Activated CD4-positive, alpha-beta T cell treated with anti-CD3 and anti-CD28 coated beads for 36 hours (primary cell): ENCODE measurements at regions of chr21 and their contacts with region 1.

Region 1: GRCh38 chr21:35390013-35390776 is 341.1 kb upstream of the RUNX1 start:
- DNase-seq: peak; percentile 22
- ATAC-seq: no peak
- H3K4me3 Mint-ChIP-seq: no peak overlapping the region
- H3K27ac Mint-ChIP-seq: peak overlapping the region; percentile 21
- H3K4me1 Mint-ChIP-seq: peaks cover 10% of the 10 kb centered on the region
- H3K27me3 Mint-ChIP-seq: no peaks in the 10 kb centered on the region

Region 2: DNA sequence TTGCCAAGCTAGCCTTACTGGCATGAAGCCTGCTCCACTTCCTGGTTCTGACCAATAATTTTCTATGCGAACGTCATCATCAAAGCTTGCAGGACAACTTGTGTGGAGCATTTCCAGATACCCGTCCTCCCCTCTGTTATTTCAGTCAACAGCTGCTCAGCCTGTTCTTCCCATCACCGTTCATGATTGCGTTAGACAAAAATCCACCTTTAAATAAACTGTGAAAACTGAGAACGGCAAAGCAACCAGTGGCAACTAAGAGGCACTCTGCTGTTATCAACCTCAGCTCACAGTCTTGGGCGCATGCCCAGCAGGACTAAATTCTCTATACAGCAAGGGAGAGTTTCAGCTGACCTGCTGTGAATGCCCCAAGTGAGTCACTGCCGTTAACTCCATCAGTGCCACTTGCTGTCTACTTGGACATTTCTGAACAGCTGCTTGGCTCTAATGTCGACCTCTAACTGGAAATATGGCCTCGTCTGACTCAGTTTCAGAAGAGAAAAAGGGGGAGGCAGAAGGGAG is 133.7 kb before region 1 on chr21:
- CTCF ChIA-PET with region 1: no interaction called
- POLR2A ChIA-PET with region 1: no interaction called
- intact Hi-C with region 1: loop called in 1 of 2 experiments (anchors 10 kb)
- DNase-seq: no peak
- ATAC-seq: no peak
- H3K4me3 Mint-ChIP-seq: no peak overlapping the region
- H3K27ac Mint-ChIP-seq: no peak overlapping the region
- H3K4me1 Mint-ChIP-seq: peaks cover 32% of the 10 kb centered on the region
- H3K27me3 Mint-ChIP-seq: peaks cover 5% of the 10 kb centered on the region

Region 3: DNA sequence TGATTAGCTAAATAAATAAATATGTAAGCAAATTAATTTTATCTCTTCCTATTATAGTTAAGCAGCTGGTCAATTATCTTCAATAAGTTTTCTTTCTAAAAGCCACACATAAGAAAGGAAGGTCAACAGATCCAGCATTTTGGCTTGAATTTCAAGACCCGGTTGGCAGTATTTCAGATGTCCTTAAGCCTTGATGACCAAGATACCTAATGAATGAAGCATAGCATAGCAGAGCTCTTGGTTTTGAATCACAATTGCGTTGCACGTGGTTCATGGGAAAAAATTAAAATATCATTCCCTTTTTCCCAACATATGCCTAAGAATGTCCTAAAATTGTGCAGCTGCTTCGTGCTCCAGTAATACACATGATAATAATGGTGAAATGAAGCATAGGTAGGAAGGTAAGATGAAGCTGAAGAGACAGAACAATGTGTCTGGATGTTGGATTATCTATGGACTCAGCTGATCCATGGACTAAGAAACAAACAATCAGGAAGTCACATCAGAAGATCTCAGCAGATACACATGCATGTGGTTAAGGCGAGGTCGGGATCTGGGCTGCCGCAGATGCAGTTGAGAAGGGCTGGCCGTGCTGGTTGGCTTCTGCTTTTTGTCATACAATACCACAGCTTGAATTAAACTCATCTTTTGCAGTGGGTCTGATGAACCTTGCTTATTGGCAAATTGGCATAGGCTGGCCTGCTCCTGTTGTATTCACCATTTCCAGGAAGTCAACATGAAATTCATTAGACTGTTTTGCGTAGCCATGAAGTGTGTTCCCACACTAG is 56.2 kb before region 1 on chr21:
- CTCF ChIA-PET with region 1: no interaction called
- POLR2A ChIA-PET with region 1: interaction called, 3 read pairs
- intact Hi-C with region 1: loop called in 1 of 2 experiments (anchors 10 kb)
- DNase-seq: no peak
- ATAC-seq: no peak
- H3K4me3 Mint-ChIP-seq: no peak overlapping the region
- H3K27ac Mint-ChIP-seq: no peak overlapping the region
- H3K4me1 Mint-ChIP-seq: peaks cover 22% of the 10 kb centered on the region
- H3K27me3 Mint-ChIP-seq: no peaks in the 10 kb centered on the region

Region 4: DNA sequence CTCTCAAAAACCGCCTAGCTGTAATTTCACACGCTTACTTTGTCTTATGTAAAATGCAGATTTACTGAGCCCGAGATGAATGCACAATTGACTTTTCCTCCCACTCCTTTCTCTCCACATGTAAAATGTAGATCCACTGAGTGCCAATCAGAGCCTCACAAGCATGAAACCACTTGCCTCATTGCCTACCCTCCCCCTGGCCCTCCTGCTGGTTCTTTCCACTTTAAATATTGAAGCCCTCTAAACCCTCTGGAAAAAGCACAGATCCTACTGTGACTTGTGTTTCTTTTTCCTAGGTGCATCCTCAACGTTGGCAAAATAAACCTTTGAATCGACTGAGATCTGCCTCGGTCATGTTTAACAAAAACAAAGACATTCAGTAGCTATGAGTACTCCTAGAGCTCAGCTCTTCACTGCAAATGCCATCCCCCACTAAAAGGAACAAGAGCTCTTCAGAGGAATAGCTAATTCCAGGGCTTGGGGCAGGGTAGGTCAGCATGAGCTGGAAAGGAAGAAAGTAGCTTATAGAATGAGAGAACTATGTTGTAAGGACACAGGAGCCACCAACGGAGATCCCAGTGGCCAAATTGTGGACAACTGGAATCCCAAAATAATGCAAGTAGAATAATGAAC is 24.4 kb after region 1 on chr21:
- CTCF ChIA-PET with region 1: no interaction called
- POLR2A ChIA-PET with region 1: no interaction called
- intact Hi-C with region 1: no loop called
- DNase-seq: no peak
- ATAC-seq: no peak
- H3K4me3 Mint-ChIP-seq: no peak overlapping the region
- H3K27ac Mint-ChIP-seq: no peak overlapping the region
- H3K4me1 Mint-ChIP-seq: no peaks in the 10 kb centered on the region
- H3K27me3 Mint-ChIP-seq: peaks cover 11% of the 10 kb centered on the region